ENCODE measurements at regions of chr3 and their contacts with region 1.

Region 1: DNA sequence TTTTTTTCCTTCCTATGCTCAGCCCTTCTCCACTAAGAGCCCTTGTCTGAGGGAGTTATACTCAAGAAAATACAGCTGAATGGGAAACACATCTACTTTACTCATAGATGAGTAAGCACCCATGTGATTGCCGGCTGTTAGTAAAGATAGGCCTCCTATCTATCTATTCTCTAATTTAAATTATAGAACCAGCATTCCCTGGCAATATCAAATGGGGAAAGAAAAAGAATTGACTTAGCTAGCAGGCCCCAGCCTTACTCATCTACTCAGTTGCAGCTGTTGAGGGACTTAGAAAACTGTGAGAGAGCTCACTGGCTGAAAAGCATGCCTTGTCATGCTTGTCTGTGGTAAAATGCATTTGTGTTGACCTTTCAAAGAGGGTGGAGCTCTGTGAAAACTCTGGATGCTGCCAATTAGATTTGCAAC is 116.9 kb upstream of the LRRFIP2 start:
- DNase-seq: peak; percentile 79
- H3K4me3 ChIP-seq: no peak overlapping the region
- H3K27ac ChIP-seq: peak overlapping the region; percentile 23
- H3K4me1 ChIP-seq: peaks cover 30% of the 10 kb centered on the region
- H3K27me3 ChIP-seq: no peaks in the 10 kb centered on the region
- CTCF ChIP-seq: no peak

Region 2: DNA sequence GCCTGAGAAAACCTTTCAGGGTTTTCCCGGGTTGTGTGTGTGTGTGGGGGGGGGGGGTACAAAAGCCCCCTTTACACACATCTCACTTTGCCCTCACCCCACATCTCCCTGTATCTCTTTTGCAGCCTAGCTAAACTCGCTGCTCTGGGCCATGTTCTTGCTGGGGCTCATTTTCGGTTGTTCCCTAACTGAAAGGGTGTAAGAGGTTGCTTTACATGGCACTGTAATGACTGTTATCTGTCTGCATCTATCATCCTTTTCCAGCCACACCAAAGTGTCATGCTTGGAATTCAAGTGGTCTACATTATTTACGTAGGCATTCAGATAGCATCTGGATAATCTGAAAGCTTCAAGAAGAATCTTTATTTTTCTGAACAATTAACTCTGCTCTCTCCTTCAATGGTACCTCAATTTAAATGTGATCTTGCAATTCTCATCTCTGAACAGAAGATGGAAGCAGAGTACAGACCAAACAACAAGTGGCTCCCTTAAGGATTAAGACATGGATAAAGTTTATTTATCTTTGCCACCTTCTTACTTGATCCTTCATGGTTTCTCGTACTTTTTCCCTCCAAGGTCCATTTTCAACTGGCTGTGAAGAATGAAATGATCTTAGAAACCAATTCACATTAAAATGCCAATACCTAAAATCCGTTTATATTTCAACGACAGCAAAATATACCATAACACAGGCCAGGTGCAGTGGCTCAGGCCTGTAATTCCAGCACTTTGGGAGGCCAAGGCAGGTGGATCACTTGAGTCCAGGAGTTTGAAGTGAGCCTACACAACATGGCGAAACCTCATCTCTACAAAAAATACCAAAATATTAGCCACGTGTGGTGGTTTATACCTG is 561.9 kb before region 1 on chr3:
- CTCF ChIA-PET with region 1: no interaction called
- dilution Hi-C with region 1: no loop called
- in situ Hi-C with region 1: no loop called
- intact Hi-C with region 1: loop called (anchors 10 kb)
- DNase-seq: peak; percentile 28
- H3K4me3 ChIP-seq: no peak overlapping the region
- H3K27ac ChIP-seq: no peak overlapping the region
- H3K4me1 ChIP-seq: no peaks in the 10 kb centered on the region
- H3K27me3 ChIP-seq: no peaks in the 10 kb centered on the region
- CTCF ChIP-seq: peak; percentile 66 to 69

Region 3: GRCh38 chr3:37218206-37218605 is 73.1 kb before region 1 on chr3:
- CTCF ChIA-PET with region 1: no interaction called
- dilution Hi-C with region 1: loop called (anchors 5 kb)
- in situ Hi-C with region 1: no loop called
- intact Hi-C with region 1: no loop called
- DNase-seq: no peak
- H3K4me3 ChIP-seq: no peak overlapping the region
- H3K27ac ChIP-seq: no peak overlapping the region
- H3K4me1 ChIP-seq: peaks cover 40% of the 10 kb centered on the region
- H3K27me3 ChIP-seq: no peaks in the 10 kb centered on the region
- CTCF ChIP-seq: no peak

Region 4: DNA sequence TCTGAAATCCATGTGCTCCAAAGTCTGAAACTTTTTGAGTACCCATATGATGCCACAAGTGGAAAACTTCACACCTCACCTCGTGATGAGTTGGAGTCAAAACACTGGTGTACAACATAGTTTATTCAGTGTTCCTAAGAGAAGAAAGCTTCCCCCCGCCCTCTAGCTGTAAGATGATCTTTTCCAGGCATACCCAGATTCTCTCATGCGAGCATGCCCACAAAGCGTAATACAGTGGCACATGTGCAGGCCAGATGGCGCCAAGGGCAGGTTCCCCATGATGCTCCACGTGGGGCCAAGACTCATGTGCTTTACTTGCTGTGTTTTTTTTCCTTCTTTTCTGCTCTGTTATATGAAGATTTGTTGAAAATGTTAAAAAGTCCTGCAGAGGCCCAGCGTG is 12.1 kb before region 1 on chr3:
- CTCF ChIA-PET with region 1: interaction called, 10 read pairs
- dilution Hi-C with region 1: no loop called
- in situ Hi-C with region 1: no loop called
- intact Hi-C with region 1: no loop called
- DNase-seq: no peak
- H3K4me3 ChIP-seq: no peak overlapping the region
- H3K27ac ChIP-seq: no peak overlapping the region
- H3K4me1 ChIP-seq: no peaks in the 10 kb centered on the region
- H3K27me3 ChIP-seq: no peaks in the 10 kb centered on the region
- CTCF ChIP-seq: no peak

Region 5: GRCh38 chr3:37324850-37325321 is 33.6 kb after region 1 on chr3:
- CTCF ChIA-PET with region 1: no interaction called
- dilution Hi-C with region 1: no loop called
- in situ Hi-C with region 1: no loop called
- intact Hi-C with region 1: no loop called
- DNase-seq: no peak
- H3K4me3 ChIP-seq: no peak overlapping the region
- H3K27ac ChIP-seq: no peak overlapping the region
- H3K4me1 ChIP-seq: no peaks in the 10 kb centered on the region
- H3K27me3 ChIP-seq: no peaks in the 10 kb centered on the region
- CTCF ChIP-seq: no peak

Measured in mammary epithelial cell (primary cell).